HEK293 (cell line): ENCODE measurements at regions of chr5 and their contacts with region 1.

Region 1: GRCh38 chr5:150161242-150162141 is 5.1 kb upstream of the CDX1 start:
- H3K4me3 ChIP-seq: peak overlapping the region; percentile 10; the same call in 1 of the 2 replicates
- H3K27ac ChIP-seq: 0 out of 2 replicates have a peak overlapping the region, but pooled peaks have one; percentile 3
- H3K4me1 ChIP-seq: no peaks in the 10 kb centered on the region
- CTCF ChIP-seq: no peak; the same call in 1 of the 2 replicates

Region 2: DNA sequence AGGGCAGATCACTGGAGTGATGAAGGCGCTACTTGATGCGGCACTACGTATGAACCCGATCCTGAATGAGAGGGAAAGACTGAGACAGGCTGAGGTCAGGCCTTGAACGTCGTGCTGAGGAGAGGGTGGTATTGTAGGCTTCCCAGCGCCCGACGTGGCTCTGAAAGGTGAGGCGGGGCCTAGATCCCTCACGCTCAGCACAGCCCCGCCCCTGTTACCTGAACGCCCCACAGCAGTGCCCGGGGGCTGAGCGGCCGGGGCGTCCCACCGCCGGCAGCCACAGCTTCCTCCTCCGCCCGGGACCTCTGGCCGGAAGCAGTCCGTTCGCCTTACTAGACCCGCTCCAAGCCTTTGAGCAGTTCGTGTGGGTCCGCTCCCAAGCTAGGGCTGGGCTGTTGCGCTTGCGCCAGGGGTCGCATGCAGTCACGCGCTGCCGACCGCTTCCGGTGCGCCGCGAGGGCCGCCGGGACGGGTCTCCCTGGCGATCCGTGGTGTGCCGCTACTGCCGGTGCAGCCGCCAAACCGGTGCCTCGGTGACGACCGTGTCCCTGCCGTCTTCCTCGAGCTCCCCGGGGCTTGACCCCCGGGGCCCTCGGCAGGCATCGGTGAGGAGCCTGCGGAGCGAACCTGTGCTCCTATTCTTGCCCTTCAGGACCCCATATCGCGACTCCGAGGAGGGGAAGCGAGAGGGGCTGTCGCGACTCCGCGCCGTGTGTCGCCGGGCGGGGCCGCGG is 161.1 kb before region 1 on chr5 and contains the starts of genes HMGXB3 and TIGD6:
- CTCF ChIA-PET with region 1: no interaction called
- POLR2A ChIA-PET with region 1: no interaction called
- H3K4me3 ChIP-seq: peak within 1 kb of the TSS; percentile 93
- H3K27ac ChIP-seq: peak within 1 kb of the TSS; percentile 85
- H3K4me1 ChIP-seq: peaks cover 9% of the 10 kb centered on the region
- CTCF ChIP-seq: peak; percentile 46; the same call in 1 of the 2 replicates

Region 3: DNA sequence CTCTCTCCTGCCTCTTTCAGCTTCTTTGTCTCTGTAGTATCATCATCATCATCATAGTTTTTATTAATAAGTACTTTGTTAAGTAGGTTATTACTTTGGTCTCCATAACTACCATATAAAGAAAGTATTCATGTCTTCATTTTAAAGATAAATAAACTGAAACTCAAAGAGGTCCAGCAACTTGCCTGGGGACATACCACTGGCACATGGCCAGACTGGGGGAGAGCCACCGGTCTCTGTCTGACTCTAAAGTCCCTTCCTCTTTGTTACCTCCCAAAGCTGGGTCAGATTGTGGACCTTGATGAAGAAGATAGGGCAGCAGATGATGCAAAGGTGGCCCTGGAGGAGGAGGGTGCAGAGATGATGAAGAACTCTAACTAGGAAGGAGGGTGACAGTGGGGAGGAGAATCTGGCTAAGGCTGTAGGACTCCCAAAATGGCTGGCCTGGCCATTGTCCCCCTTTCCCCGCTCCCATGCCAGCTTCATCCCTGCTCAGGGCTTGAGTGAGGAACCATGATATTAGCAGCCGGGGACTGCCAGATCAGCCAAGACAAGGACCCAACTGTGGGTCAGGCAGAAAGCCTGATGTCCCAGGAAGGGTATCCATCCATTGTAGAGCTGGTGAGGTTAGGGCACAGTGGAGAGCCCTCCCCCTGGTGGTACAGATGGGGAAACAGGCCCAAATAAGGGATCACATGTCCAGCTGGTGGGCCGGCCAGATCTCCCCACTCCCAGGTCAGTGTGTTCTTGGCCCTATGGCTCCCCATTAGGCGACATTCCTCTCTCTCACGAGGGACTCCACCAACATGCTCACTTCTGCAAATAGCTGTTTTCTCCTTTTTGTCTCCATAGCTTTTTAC is 13.8 kb after region 1 on chr5:
- CTCF ChIA-PET with region 1: interaction called, 20 read pairs
- POLR2A ChIA-PET with region 1: no interaction called
- H3K4me3 ChIP-seq: no peak overlapping the region
- H3K27ac ChIP-seq: no peak overlapping the region
- H3K4me1 ChIP-seq: no peaks in the 10 kb centered on the region
- CTCF ChIP-seq: peak; percentile 61

Region 4: GRCh38 chr5:150224483-150225027 is 63.1 kb after region 1 on chr5:
- CTCF ChIA-PET with region 1: interaction called, 13 read pairs
- POLR2A ChIA-PET with region 1: no interaction called
- H3K4me3 ChIP-seq: no peak overlapping the region
- H3K27ac ChIP-seq: no peak overlapping the region
- H3K4me1 ChIP-seq: no peaks in the 10 kb centered on the region
- CTCF ChIP-seq: no peak

Region 5: GRCh38 chr5:150350524-150351344 is 189.2 kb after region 1 on chr5:
- CTCF ChIA-PET with region 1: interaction called, 15 read pairs
- POLR2A ChIA-PET with region 1: no interaction called
- H3K4me3 ChIP-seq: no peak overlapping the region
- H3K27ac ChIP-seq: no peak overlapping the region
- H3K4me1 ChIP-seq: no peaks in the 10 kb centered on the region
- CTCF ChIP-seq: peak; percentile 86